K562 (cell line): ENCODE measurements at regions of chr9 and their contacts with region 1.

Region 1: DNA sequence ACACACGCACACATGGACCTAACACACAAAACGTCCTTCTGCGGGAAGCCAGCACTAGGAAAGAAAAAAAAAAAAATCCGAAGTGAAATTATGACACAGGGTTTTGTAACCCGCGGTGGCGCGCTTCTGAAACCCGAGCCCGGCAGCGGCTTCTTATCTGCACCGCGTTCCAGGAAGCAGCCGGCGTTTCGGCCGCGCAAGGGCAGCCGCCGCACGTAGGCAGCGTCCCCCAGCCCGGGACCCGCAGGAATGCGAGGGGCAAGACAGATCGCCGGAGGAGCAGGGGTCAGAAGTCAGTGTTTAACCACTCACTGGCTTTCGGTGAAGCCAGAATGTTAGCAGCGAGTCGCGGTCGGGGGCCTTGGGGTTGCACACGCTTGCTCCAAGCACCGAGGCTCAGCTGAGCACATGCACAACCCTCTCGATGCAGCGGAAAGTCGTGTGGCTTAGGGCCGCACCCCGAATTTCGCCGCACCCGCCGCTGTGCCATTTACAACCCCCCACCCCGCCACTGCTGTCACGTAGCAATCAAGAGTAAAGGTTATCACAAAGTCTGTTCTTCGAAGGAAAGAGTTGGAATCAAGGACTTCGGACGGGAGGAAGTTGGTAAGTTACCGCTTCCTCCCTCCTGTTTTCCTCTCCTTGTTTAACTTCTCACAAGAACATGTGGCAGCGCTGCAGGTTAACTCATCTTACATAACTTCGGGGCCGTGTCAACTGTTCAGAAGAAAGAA is 167.9 kb downstream of the AUH start:
- DNase-seq: peak; percentile 69 to 92 (median 75)
- ATAC-seq: peak; percentile 85
- H3K4me3 ChIP-seq: peak overlapping the region; percentile 31
- H3K27ac ChIP-seq: peak overlapping the region; percentile 99
- H3K4me1 ChIP-seq: peaks cover 26 to 60% of the 10 kb centered on the region in 2 experiments
- H3K27me3 ChIP-seq: no peaks in the 10 kb centered on the region
- CTCF ChIP-seq: peak in 1 of 3 experiments; percentile 21; a peak in 1 of 6 replicates
- EP300 ChIP-seq: peak; percentile 71
- POLR2A ChIP-seq: peak; percentile 81
- RAD21 ChIP-seq: peak in 1 of 2 experiments; percentile 28; a peak in 1 of 4 replicates

Region 2: GRCh38 chr9:90961356-90961755 is 232.5 kb before region 1 on chr9:
- CTCF ChIA-PET with region 1: no interaction called
- POLR2A ChIA-PET with region 1: no interaction called
- in situ Hi-C with region 1: no loop called
- intact Hi-C with region 1: no loop called
- DNase-seq: no peak
- ATAC-seq: no peak
- H3K4me3 ChIP-seq: no peak overlapping the region
- H3K27ac ChIP-seq: no peak overlapping the region
- H3K4me1 ChIP-seq: no peaks in the 10 kb centered on the region
- H3K27me3 ChIP-seq: peaks cover 4 to 43% of the 10 kb centered on the region in 2 experiments; a peak in 4 of 5 replicates
- CTCF ChIP-seq: no peak
- EP300 ChIP-seq: no peak
- POLR2A ChIP-seq: no peak
- RAD21 ChIP-seq: no peak

Region 3: GRCh38 chr9:91101611-91102168 is 92.1 kb before region 1 on chr9:
- CTCF ChIA-PET with region 1: no interaction called
- POLR2A ChIA-PET with region 1: no interaction called
- in situ Hi-C with region 1: no loop called
- intact Hi-C with region 1: loop called (anchors 10 kb)
- DNase-seq: no peak
- ATAC-seq: no peak
- H3K4me3 ChIP-seq: no peak overlapping the region
- H3K27ac ChIP-seq: no peak overlapping the region
- H3K4me1 ChIP-seq: no peaks in the 10 kb centered on the region; a peak in 1 of 5 replicates
- H3K27me3 ChIP-seq: peaks cover 0 to 14% of the 10 kb centered on the region in 2 experiments; a peak in 2 of 5 replicates
- CTCF ChIP-seq: no peak
- EP300 ChIP-seq: no peak
- POLR2A ChIP-seq: no peak
- RAD21 ChIP-seq: no peak

Region 4: GRCh38 chr9:91253488-91253887 is 59.7 kb after region 1 on chr9:
- CTCF ChIA-PET with region 1: no interaction called
- POLR2A ChIA-PET with region 1: no interaction called
- in situ Hi-C with region 1: no loop called
- intact Hi-C with region 1: loop called (anchors 5 kb)
- DNase-seq: peak; percentile 12 to 58 (median 35)
- ATAC-seq: peak; percentile 81
- H3K4me3 ChIP-seq: no peak overlapping the region
- H3K27ac ChIP-seq: no peak overlapping the region
- H3K4me1 ChIP-seq: no peaks in the 10 kb centered on the region
- H3K27me3 ChIP-seq: no peaks in the 10 kb centered on the region
- CTCF ChIP-seq: peak; percentile 10 to 58 (median 31); a peak in 3 of 6 replicates
- EP300 ChIP-seq: no peak
- POLR2A ChIP-seq: no peak
- RAD21 ChIP-seq: peak; percentile 68 to 75

Region 5: DNA sequence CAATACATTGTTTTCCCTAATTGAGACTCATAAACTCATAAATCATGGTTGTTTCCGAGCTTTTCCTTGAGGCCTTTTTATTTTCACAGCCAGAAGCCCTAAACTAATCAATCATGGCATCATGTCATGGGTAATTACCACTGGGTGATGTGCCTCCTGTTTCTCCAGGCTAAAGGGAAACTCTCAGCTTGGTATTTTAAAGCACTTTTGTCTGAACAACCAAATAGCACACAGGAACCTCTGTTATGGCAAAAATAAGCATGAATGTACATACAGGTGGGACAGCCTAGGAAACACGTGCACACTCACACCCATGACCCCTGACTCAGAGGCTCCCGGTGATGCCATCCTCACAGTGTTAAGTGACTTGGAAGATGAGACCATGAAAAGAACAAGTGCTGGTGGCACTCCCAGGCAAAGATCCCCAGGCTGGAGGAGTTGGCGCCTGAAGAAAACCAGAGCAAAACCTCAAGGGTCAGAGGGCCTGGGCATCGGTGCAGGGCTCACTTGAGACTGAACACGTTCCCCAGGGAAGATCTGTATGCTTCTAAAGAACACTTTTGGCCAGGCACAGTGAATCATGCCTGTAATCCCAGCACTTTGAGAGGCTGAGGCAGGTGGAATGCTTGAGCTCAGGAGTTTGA is 601.9 kb after region 1 on chr9:
- CTCF ChIA-PET with region 1: no interaction called
- POLR2A ChIA-PET with region 1: no interaction called
- in situ Hi-C with region 1: no loop called
- intact Hi-C with region 1: no loop called
- DNase-seq: no peak
- ATAC-seq: no peak
- H3K4me3 ChIP-seq: no peak overlapping the region
- H3K27ac ChIP-seq: no peak overlapping the region
- H3K4me1 ChIP-seq: peaks cover 31 to 34% of the 10 kb centered on the region in 2 experiments
- H3K27me3 ChIP-seq: no peaks in the 10 kb centered on the region
- CTCF ChIP-seq: no peak
- EP300 ChIP-seq: no peak
- POLR2A ChIP-seq: no peak
- RAD21 ChIP-seq: no peak